HepG2 (cell line): ENCODE measurements at regions of chr22 and their contacts with region 1.

Region 1: GRCh38 chr22:45645526-45646414 is 25.9 kb upstream of the ATXN10 start:
- DNase-seq: no peak
- ATAC-seq: peak; percentile 96
- H3K4me3 ChIP-seq: peak overlapping the region; percentile 45 to 70 (median 58); a peak in 5 of 6 replicates
- H3K27ac ChIP-seq: no peak overlapping the region
- H3K4me1 ChIP-seq: peaks cover 57% of the 10 kb centered on the region
- H3K27me3 ChIP-seq: no peaks in the 10 kb centered on the region; a peak in 1 of 5 replicates
- CTCF ChIP-seq: peak; percentile 90
- EP300 ChIP-seq: no peak
- POLR2A ChIP-seq: no peak
- RAD21 ChIP-seq: peak; percentile 99

Region 2: GRCh38 chr22:45626198-45626651 is 19.5 kb before region 1 on chr22:
- CTCF ChIA-PET with region 1: no interaction called
- POLR2A ChIA-PET with region 1: no interaction called
- in situ Hi-C with region 1: no loop called
- intact Hi-C with region 1: no loop called
- DNase-seq: peak; percentile 55
- ATAC-seq: no peak
- H3K4me3 ChIP-seq: peak overlapping the region in 1 of 3 experiments; percentile 28; a peak in 1 of 6 replicates
- H3K27ac ChIP-seq: no peak overlapping the region
- H3K4me1 ChIP-seq: peaks cover 66% of the 10 kb centered on the region
- H3K27me3 ChIP-seq: peaks cover 1 to 17% of the 10 kb centered on the region in 2 experiments; a peak in 3 of 5 replicates
- CTCF ChIP-seq: no peak
- EP300 ChIP-seq: no peak
- POLR2A ChIP-seq: no peak
- RAD21 ChIP-seq: no peak

Region 3: DNA sequence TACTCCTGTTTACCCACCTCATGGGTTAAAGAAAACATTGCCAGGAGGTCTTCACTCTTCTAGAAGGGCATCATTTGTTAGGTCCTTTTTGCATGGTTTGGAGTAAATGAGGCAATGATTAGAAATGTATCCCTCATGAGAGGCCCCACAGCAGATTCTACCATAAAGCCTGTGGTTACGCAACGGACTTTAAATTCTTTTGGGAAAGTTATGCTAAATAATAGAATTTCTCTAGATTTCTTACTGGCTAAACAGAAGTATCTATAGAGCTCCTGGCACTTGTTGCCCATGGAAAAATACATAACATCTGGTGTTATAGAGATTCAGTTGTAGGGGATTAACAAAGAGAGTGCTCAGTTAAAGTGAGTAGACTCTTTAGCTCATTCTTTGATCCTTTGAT is 10.8 kb after region 1 on chr22:
- CTCF ChIA-PET with region 1: no interaction called
- POLR2A ChIA-PET with region 1: no interaction called
- in situ Hi-C with region 1: no loop called
- intact Hi-C with region 1: no loop called
- DNase-seq: peak; percentile 43
- ATAC-seq: no peak
- H3K4me3 ChIP-seq: no peak overlapping the region
- H3K27ac ChIP-seq: peak overlapping the region; percentile 19
- H3K4me1 ChIP-seq: peaks cover 63% of the 10 kb centered on the region
- H3K27me3 ChIP-seq: no peaks in the 10 kb centered on the region; a peak in 1 of 5 replicates
- CTCF ChIP-seq: no peak
- EP300 ChIP-seq: no peak
- POLR2A ChIP-seq: no peak
- RAD21 ChIP-seq: no peak

Region 4: DNA sequence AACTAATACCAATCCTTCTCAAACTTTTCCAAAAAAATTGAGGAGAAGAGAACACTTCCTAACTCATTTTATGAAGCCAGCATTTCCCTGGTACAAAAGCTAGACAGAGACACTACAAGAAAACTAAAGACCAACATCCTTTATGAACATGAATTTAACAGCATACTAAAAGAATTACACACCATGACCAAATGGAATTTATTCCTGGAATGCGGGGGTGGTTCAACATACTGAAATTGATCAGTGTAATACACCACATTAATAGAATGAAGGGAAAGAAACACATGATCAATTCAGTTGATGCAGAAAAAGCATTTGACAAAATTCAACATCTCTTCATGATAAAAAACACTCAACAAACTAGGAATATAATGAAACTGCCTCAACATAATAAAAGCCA is 183.1 kb after region 1 on chr22:
- CTCF ChIA-PET with region 1: no interaction called
- POLR2A ChIA-PET with region 1: no interaction called
- in situ Hi-C with region 1: no loop called
- intact Hi-C with region 1: loop called (anchors 10 kb)
- DNase-seq: no peak
- ATAC-seq: no peak
- H3K4me3 ChIP-seq: no peak overlapping the region
- H3K27ac ChIP-seq: no peak overlapping the region
- H3K4me1 ChIP-seq: peaks cover 4% of the 10 kb centered on the region
- H3K27me3 ChIP-seq: no peaks in the 10 kb centered on the region
- CTCF ChIP-seq: no peak
- EP300 ChIP-seq: no peak
- POLR2A ChIP-seq: no peak
- RAD21 ChIP-seq: no peak

Region 5: GRCh38 chr22:45842291-45842991 is 196.7 kb after region 1 on chr22:
- CTCF ChIA-PET with region 1: no interaction called
- POLR2A ChIA-PET with region 1: no interaction called
- in situ Hi-C with region 1: loop called (anchors 10 kb)
- intact Hi-C with region 1: no loop called
- DNase-seq: no peak
- ATAC-seq: no peak
- H3K4me3 ChIP-seq: no peak overlapping the region
- H3K27ac ChIP-seq: no peak overlapping the region
- H3K4me1 ChIP-seq: peaks cover 5% of the 10 kb centered on the region; the same call in 1 of the 2 replicates
- H3K27me3 ChIP-seq: no peaks in the 10 kb centered on the region
- CTCF ChIP-seq: no peak
- EP300 ChIP-seq: no peak
- POLR2A ChIP-seq: no peak
- RAD21 ChIP-seq: no peak

Region 6: DNA sequence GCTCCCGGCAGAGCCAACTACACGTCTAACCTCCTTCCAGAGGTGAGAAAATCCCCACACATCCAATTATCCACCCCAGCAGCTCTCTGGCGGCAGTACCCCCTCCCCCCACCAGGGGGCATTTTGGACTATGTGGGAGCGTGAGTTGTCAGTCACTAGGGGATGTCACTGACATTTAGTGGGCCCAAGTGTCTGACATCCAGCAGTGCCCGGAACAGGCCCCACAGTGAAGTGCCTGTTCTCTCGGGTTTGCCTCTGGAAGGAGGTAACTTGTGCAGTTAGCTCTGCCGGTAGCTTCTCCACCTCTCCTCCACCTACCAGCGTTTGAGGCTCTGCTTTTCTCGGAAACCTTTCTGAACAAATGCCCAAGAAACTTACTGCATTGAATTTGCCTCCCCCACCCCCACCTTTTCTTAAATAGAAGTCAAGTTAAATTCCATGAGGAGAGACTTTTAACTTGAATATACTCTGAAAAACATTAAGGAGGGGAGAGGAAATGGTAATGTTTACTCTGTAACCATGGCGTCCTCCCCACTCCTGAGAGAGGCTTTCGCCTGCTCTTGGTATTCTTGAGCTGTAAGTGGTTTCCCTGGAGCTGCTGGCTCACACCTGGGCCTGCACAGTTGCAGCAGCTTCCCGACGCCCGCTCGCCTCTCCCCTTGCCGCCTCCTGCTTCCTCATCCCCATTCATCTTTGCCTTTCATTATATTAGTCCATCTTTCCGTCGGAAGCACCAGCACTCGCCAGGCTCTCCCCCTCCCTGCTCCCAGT is 218.4 kb after region 1 on chr22:
- CTCF ChIA-PET with region 1: interaction called, 6 read pairs
- POLR2A ChIA-PET with region 1: no interaction called
- in situ Hi-C with region 1: no loop called
- intact Hi-C with region 1: loop called (anchors 10 kb)
- DNase-seq: peak; percentile 45
- ATAC-seq: peak; percentile 25
- H3K4me3 ChIP-seq: no peak overlapping the region
- H3K27ac ChIP-seq: no peak overlapping the region
- H3K4me1 ChIP-seq: peaks cover 13% of the 10 kb centered on the region
- H3K27me3 ChIP-seq: peaks cover 1 to 16% of the 10 kb centered on the region in 2 experiments; a peak in 3 of 5 replicates
- CTCF ChIP-seq: peak; percentile 81
- EP300 ChIP-seq: no peak
- POLR2A ChIP-seq: no peak
- RAD21 ChIP-seq: peak; percentile 50; the same call in 1 of the 2 replicates

Region 7: DNA sequence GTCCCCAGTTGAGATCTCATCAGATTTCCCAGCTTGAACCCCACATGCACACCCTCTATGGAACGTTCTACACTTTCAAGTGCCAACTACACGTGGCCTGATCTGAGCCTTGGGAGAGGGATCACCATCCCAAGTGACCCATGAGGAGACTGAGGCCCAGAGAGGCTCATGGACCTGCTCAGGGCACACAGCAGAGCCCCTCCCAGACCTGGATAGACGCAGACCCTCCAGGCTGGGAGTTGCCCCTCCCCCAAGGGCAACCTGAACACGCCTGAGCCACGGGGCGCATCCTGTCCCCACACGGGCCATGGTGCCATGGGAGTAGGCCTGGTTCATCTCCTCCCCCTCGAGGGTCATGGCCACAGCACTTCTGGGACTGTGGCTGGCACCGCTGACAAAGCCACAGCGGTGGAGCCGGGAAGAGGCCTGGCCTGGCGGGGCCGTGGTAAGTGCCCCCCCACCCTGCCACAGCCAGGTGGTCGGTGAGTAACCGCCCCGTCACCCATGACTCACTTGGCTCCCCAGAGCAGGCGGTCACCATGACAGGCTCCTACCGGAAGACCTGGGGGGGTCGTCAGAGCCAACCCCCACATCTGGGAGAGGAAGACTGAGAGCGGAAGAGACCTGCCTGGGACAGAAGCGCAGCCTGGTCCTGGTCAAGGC is 323.1 kb after region 1 on chr22:
- CTCF ChIA-PET with region 1: no interaction called
- POLR2A ChIA-PET with region 1: no interaction called
- in situ Hi-C with region 1: no loop called
- intact Hi-C with region 1: loop called (anchors 5 kb)
- DNase-seq: no peak
- ATAC-seq: no peak
- H3K4me3 ChIP-seq: no peak overlapping the region
- H3K27ac ChIP-seq: no peak overlapping the region
- H3K4me1 ChIP-seq: peaks cover 40% of the 10 kb centered on the region
- H3K27me3 ChIP-seq: peaks cover 23 to 92% of the 10 kb centered on the region in 2 experiments
- CTCF ChIP-seq: no peak
- EP300 ChIP-seq: no peak
- POLR2A ChIP-seq: no peak
- RAD21 ChIP-seq: no peak

Region 8: DNA sequence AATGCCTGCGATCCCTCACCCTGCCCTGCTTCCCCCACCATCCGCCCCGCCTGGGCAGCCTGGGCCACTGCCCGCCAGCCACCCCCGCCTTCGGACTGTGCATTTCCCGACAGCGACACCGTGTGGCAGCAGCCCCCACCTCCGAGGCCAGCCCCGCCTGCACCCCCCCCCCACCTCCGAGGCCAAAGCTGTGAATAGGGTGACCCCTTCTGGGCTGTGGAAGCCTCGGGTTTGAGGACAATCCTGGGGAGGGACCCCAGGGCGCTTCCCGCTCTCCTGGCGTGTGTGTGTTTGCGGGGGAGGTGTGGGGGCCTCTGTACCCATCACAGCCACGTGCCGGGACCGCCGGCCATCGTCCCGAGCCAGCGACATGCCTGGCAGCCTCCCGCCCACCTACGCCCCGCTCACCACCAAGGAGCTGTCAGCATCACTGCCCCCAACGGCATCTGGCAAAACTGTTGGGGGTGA is 470.8 kb after region 1 on chr22:
- CTCF ChIA-PET with region 1: no interaction called
- POLR2A ChIA-PET with region 1: no interaction called
- in situ Hi-C with region 1: loop called (anchors 25 kb)
- intact Hi-C with region 1: no loop called
- DNase-seq: peak; percentile 74
- ATAC-seq: peak; percentile 81
- H3K4me3 ChIP-seq: no peak overlapping the region
- H3K27ac ChIP-seq: no peak overlapping the region
- H3K4me1 ChIP-seq: peaks cover 26% of the 10 kb centered on the region
- H3K27me3 ChIP-seq: peaks cover 2 to 46% of the 10 kb centered on the region in 2 experiments; a peak in 3 of 5 replicates
- CTCF ChIP-seq: peak; percentile 99
- EP300 ChIP-seq: no peak
- POLR2A ChIP-seq: no peak
- RAD21 ChIP-seq: peak; percentile 98